Activated CD4-positive, alpha-beta T cell treated with anti-CD3 and anti-CD28 coated beads, Interleukin-2, amount 10 ng/mL, durations not matched to agents 24 days and 14 days (primary cell): ENCODE measurements at regions of chr12 and their contacts with region 1.

Region 1: GRCh38 chr12:46372544-46373110 is at the start of gene SLC38A2:
- DNase-seq: peak; percentile 99
- H3K4me3 Mint-ChIP-seq: peak within 1 kb of the TSS; percentile 86
- H3K27ac Mint-ChIP-seq: peak within 1 kb of the TSS; percentile 99
- H3K4me1 Mint-ChIP-seq: peaks cover 60% of the 10 kb centered on the region
- H3K27me3 Mint-ChIP-seq: peaks cover 3% of the 10 kb centered on the region
- total RNA-seq, gene SLC38A2: 158 and 168 TPM in 2 replicates

Region 2: DNA sequence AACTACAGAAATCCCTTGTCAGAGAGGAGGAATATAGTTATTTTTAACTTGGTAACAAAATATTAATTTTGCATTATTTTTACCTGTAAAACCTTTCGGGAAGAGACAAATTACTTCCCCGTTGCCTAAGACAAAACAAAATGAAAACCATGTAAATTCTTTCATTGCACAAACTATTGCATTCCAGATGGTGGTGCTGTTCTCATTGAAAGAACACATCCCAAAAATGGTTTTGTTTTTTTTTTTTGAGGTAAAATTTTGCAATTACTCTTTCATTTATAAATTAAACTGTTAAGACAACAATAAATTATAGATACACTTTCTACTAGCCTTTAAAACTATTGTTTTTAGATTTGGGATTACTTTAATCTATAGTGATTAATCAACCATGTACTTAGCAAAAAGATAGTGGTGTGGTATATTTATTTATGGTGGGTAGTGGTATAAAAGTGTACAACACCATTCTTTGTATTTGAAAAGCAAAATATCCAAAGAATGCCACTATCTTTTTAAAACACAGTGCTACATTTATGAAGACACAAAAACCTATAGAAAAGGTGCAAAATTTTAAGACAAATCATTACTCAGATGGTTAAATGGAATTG is 219.3 kb before region 1 on chr12:
- intact Hi-C with region 1: loop called (anchors 5 kb)
- DNase-seq: no peak
- H3K4me3 Mint-ChIP-seq: no peak overlapping the region
- H3K27ac Mint-ChIP-seq: no peak overlapping the region
- H3K4me1 Mint-ChIP-seq: no peaks in the 10 kb centered on the region
- H3K27me3 Mint-ChIP-seq: peaks cover 11% of the 10 kb centered on the region

Region 3: GRCh38 chr12:46268590-46269558 is 103.8 kb before region 1 on chr12 and contains the start of gene SLC38A1:
- intact Hi-C with region 1: loop called (anchors 2 kb)
- DNase-seq: peak; percentile 96
- H3K4me3 Mint-ChIP-seq: no peak within 1 kb of the TSS
- H3K27ac Mint-ChIP-seq: no peak within 1 kb of the TSS
- H3K4me1 Mint-ChIP-seq: peaks cover 21% of the 10 kb centered on the region
- H3K27me3 Mint-ChIP-seq: no peaks in the 10 kb centered on the region
- total RNA-seq, gene SLC38A1: 180 and 181 TPM in 2 replicates

Region 4: GRCh38 chr12:46459861-46460545 is 87.4 kb after region 1 on chr12:
- intact Hi-C with region 1: loop called (anchors 2 kb)
- DNase-seq: peak; percentile 81
- H3K4me3 Mint-ChIP-seq: peak overlapping the region; percentile 85
- H3K27ac Mint-ChIP-seq: peak overlapping the region; percentile 99
- H3K4me1 Mint-ChIP-seq: peaks cover 53% of the 10 kb centered on the region
- H3K27me3 Mint-ChIP-seq: no peaks in the 10 kb centered on the region

Region 5: GRCh38 chr12:46546634-46547286 is 174.1 kb after region 1 on chr12:
- intact Hi-C with region 1: loop called (anchors 2 kb)
- DNase-seq: peak; percentile 79
- H3K4me3 Mint-ChIP-seq: peak overlapping the region; percentile 55
- H3K27ac Mint-ChIP-seq: peak overlapping the region; percentile 88
- H3K4me1 Mint-ChIP-seq: peaks cover 62% of the 10 kb centered on the region
- H3K27me3 Mint-ChIP-seq: no peaks in the 10 kb centered on the region

Region 6: DNA sequence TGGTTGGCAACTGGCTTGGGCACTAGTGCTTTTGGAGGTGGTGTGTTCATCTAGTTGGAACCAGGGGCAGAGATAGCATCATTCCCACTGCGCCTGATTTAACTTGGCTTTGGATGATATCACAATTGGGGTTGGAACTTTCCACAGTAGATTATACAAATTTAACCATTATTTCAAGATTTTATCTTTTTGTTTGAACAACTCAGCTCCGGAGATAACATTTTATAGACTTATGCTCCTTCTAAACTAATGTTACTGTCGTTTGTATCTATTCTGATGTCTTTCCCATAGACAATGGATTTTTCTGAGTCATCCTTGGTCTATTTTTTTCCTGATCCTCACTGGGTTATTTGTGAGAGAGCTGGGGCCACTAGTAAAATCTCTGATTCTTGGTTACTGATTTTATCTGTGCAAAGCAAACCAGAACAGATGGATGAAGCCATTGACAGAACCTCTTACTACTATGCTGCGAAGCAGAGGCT is 278.0 kb after region 1 on chr12:
- intact Hi-C with region 1: no loop called
- DNase-seq: no peak
- H3K4me3 Mint-ChIP-seq: no peak overlapping the region
- H3K27ac Mint-ChIP-seq: no peak overlapping the region
- H3K4me1 Mint-ChIP-seq: no peaks in the 10 kb centered on the region
- H3K27me3 Mint-ChIP-seq: no peaks in the 10 kb centered on the region

Region 7: GRCh38 chr12:47216150-47216677 is 843.6 kb after region 1 on chr12:
- intact Hi-C with region 1: loop called (anchors 5 kb)
- DNase-seq: peak; percentile 93
- H3K4me3 Mint-ChIP-seq: peak overlapping the region; percentile 96
- H3K27ac Mint-ChIP-seq: peak overlapping the region; percentile 98
- H3K4me1 Mint-ChIP-seq: peaks cover 49% of the 10 kb centered on the region
- H3K27me3 Mint-ChIP-seq: no peaks in the 10 kb centered on the region

Region 8: DNA sequence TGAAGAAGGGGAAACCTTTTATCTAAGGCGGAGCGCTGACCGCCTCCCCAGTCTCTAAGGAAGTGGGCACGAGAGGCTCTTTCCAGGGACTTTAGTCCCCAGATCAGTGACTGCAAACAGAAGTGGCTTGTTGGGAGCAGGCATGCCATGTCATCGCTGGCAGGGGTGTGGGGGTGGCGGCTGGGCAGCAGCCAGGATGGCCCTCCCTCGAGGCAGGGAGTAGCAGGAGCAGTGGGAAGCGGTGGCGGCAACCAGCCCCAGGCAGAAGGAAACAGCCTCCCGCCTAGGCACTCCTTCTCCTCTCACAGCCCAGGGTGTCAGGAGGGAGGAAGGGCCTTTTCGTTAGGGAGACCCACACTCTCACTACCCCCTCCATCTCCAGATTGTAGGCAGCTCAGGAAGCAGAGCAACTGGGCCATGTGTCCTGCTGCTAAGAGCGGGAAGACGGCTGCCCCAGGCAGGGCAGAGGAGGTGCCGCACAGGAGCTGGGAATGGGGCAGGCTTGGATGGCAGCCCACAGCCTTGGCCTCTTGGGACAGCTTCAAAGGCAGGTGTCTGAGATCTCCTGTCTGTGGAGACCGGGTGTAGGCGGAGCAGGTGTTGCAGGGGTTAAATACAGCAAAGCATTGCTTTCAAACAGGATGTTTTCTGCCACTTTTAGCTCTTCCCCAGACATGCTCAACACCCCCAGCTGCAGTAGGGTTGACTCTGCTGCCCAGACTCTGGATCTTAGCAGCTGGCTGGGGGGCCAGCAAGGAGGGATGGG is 1510.3 kb after region 1 on chr12:
- intact Hi-C with region 1: loop called (anchors 10 kb)
- DNase-seq: peak; percentile 84
- H3K4me3 Mint-ChIP-seq: peak overlapping the region; percentile 95
- H3K27ac Mint-ChIP-seq: peak overlapping the region; percentile 99
- H3K4me1 Mint-ChIP-seq: peaks cover 81% of the 10 kb centered on the region
- H3K27me3 Mint-ChIP-seq: no peaks in the 10 kb centered on the region